Right cardiac atrium (tissue), 5 donors: ENCODE measurements at regions of chr3 and their contacts with region 1.

Region 1: DNA sequence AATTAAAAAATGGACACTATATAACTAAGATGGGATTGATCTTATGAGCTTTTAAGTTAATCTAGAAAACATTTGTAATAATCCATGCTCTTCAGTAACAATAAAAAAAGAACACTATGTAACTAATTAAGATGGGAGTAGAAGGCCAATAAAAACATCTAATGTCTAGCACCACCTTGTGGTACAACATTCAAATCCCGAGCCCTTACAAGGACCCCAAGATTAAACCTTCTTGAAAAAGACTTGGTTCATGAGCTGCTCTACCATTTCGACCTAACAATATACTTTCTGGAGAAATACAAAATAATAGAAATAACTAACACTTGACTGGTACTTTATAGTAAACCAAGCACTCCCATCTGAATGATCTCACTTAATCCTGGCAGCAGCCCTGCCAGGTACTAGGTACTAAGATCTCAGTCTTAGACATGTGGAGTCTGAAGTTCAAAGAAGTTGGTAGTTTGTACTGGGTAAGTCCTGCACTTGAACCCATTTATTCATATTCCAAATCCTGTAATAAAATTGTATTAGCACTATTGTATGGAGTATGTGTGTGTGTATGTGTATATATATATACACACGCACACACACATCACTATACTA is 21.8 kb downstream of the METTL6 start:
- DNase-seq: no peak
- ATAC-seq: peak; percentile 64 to 72
- H3K4me3 ChIP-seq: no peak overlapping the region
- H3K27ac ChIP-seq: no peak overlapping the region
- H3K4me1 ChIP-seq: no peaks in the 10 kb centered on the region
- H3K27me3 ChIP-seq: no peaks in the 10 kb centered on the region

Region 2: DNA sequence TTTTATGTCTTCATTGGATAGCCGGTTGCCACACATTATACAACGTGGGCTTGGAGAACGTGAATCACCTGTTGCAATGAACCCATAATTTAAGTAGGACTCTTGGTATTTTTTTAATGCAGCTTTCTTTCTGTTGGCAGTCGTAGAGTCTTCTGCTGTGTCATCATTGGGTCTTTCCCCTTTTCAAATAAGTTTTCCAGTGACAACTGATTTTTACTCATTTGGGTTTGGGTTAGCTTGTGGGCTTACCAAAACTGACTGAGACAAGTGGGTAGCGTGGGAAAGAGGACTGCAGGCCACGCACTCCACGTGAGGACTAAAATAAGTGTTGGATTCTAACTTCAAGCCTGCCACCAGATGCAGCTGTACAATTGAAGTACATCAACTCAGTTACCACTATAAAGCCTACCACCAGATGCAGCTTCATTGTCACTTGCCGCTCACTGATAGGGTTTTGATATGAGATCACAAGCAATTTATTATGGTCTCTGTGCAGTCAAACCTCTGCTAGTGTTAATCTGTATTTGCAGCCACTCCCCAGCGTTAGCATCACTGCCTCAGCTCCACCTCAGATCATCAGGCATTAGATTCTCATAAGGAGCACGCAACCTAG is 205.9 kb before region 1 on chr3:
- intact Hi-C with region 1: loop called in 2 of 4 experiments (anchors 5 to 10 kb)
- DNase-seq: no peak
- ATAC-seq: no peak
- H3K4me3 ChIP-seq: no peak overlapping the region
- H3K27ac ChIP-seq: no peak overlapping the region
- H3K4me1 ChIP-seq: no peaks in the 10 kb centered on the region
- H3K27me3 ChIP-seq: no peaks in the 10 kb centered on the region